Heart right ventricle (tissue), 16 donors: ENCODE measurements at regions of chr1 and their contacts with region 1.

Region 1: GRCh38 chr1:207089627-207090265 is 1.1 kb downstream of the C4BPB start:
- DNase-seq: no peak
- ATAC-seq: no peak
- H3K4me3 ChIP-seq: peak overlapping the region in 1 of 10 donors; percentile 0
- H3K27ac ChIP-seq: peak overlapping the region in 1 of 10 donors; percentile 41
- H3K4me1 ChIP-seq: peaks cover 0 to 9% (median 0%) of the 10 kb centered on the region in 9 donors
- H3K27me3 ChIP-seq: no peaks in the 10 kb centered on the region
- CTCF ChIP-seq: no peak

Region 2: DNA sequence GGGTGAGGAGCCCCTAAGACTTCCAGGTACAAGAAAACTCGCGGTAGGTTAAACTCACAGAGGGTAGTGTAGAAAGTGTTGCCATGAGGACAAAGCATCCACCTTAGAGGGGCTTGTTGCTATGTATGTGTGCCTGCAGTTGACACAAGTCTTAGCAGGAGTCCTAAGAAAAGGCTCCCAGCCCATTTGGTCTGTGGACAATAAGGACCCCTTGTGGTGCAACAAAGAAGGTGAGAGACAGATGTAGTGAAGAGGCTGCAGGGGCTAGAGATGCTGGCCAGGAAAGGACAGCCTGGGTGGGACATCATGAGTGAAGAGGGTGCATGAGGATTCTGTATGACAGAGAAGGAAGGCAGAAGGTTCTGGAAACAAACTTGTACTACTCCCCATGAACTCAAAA is 281.1 kb before region 1 on chr1:
- intact Hi-C with region 1: no loop called
- DNase-seq: peak in 1 of 2 donors; percentile 34
- ATAC-seq: peak in 7 of 8 donors; percentile 68 to 85 (median 75)
- H3K4me3 ChIP-seq: no peak overlapping the region
- H3K27ac ChIP-seq: no peak overlapping the region
- H3K4me1 ChIP-seq: peaks cover 0 to 17% (median 0%) of the 10 kb centered on the region in 9 donors
- H3K27me3 ChIP-seq: peaks cover 0 to 4% (median 0%) of the 10 kb centered on the region in 7 donors
- CTCF ChIP-seq: peak in 8 of 9 donors; percentile 21 to 56 (median 48)

Region 3: GRCh38 chr1:207414606-207415108 is 324.9 kb after region 1 on chr1:
- intact Hi-C with region 1: loop called in 3 of 10 experiments (anchors 5 kb)
- DNase-seq: no peak
- ATAC-seq: no peak
- H3K4me3 ChIP-seq: no peak overlapping the region
- H3K27ac ChIP-seq: peak overlapping the region in 1 of 10 donors; percentile 90
- H3K4me1 ChIP-seq: peaks cover 0 to 60% (median 0%) of the 10 kb centered on the region in 9 donors
- H3K27me3 ChIP-seq: peaks cover 0 to 16% (median 0%) of the 10 kb centered on the region in 7 donors
- CTCF ChIP-seq: no peak